ENCODE measurements at regions of chrX and their contacts with region 1.

Region 1: GRCh38 chrX:81377329-81377728 is 175.4 kb downstream of the SH3BGRL start:
- DNase-seq: no peak
- H3K4me3 Mint-ChIP-seq: no peak overlapping the region
- H3K27ac Mint-ChIP-seq: no peak overlapping the region
- H3K4me1 Mint-ChIP-seq: no peaks in the 10 kb centered on the region
- H3K27me3 Mint-ChIP-seq: peaks cover 4% of the 10 kb centered on the region

Region 2: GRCh38 chrX:81121513-81122382 is 255.6 kb before region 1 on chrX:
- CTCF ChIA-PET with region 1: no interaction called
- intact Hi-C with region 1: loop called (anchors 5 kb)
- DNase-seq: peak; percentile 91
- H3K4me3 Mint-ChIP-seq: peak overlapping the region; percentile 91
- H3K27ac Mint-ChIP-seq: peak overlapping the region; percentile 85
- H3K4me1 Mint-ChIP-seq: peaks cover 3% of the 10 kb centered on the region
- H3K27me3 Mint-ChIP-seq: no peaks in the 10 kb centered on the region

Region 3: GRCh38 chrX:81174286-81174685 is 203.0 kb before region 1 on chrX:
- CTCF ChIA-PET with region 1: interaction called, 6 read pairs
- intact Hi-C with region 1: loop called (anchors 1 kb)
- DNase-seq: no peak
- H3K4me3 Mint-ChIP-seq: no peak overlapping the region
- H3K27ac Mint-ChIP-seq: no peak overlapping the region
- H3K4me1 Mint-ChIP-seq: no peaks in the 10 kb centered on the region
- H3K27me3 Mint-ChIP-seq: no peaks in the 10 kb centered on the region

Region 4: GRCh38 chrX:81195712-81196111 is 181.6 kb before region 1 on chrX:
- CTCF ChIA-PET with region 1: interaction called, 10 read pairs
- intact Hi-C with region 1: loop called (anchors 1 kb)
- DNase-seq: peak; percentile 71
- H3K4me3 Mint-ChIP-seq: no peak overlapping the region
- H3K27ac Mint-ChIP-seq: no peak overlapping the region
- H3K4me1 Mint-ChIP-seq: peaks cover 16% of the 10 kb centered on the region
- H3K27me3 Mint-ChIP-seq: no peaks in the 10 kb centered on the region